Endothelial cell of umbilical vein (primary cell): ENCODE measurements at regions of chr20 and their contacts with region 1.

Region 1: GRCh38 chr20:12961725-12962124 is 47.0 kb upstream of the SPTLC3 start:
- DNase-seq: no peak
- H3K4me3 ChIP-seq: no peak overlapping the region
- H3K27ac ChIP-seq: no peak overlapping the region
- H3K4me1 ChIP-seq: peaks cover 3% of the 10 kb centered on the region
- H3K27me3 ChIP-seq: no peaks in the 10 kb centered on the region
- CTCF ChIP-seq: no peak
- POLR2A ChIP-seq: no peak

Region 2: GRCh38 chr20:12875510-12875909 is 86.2 kb before region 1 on chr20:
- CTCF ChIA-PET with region 1: no interaction called
- POLR2A ChIA-PET with region 1: no interaction called
- dilution Hi-C with region 1: no loop called
- intact Hi-C with region 1: no loop called
- DNase-seq: no peak
- H3K4me3 ChIP-seq: no peak overlapping the region
- H3K27ac ChIP-seq: no peak overlapping the region
- H3K4me1 ChIP-seq: no peaks in the 10 kb centered on the region
- H3K27me3 ChIP-seq: no peaks in the 10 kb centered on the region
- CTCF ChIP-seq: no peak
- POLR2A ChIP-seq: no peak

Region 3: DNA sequence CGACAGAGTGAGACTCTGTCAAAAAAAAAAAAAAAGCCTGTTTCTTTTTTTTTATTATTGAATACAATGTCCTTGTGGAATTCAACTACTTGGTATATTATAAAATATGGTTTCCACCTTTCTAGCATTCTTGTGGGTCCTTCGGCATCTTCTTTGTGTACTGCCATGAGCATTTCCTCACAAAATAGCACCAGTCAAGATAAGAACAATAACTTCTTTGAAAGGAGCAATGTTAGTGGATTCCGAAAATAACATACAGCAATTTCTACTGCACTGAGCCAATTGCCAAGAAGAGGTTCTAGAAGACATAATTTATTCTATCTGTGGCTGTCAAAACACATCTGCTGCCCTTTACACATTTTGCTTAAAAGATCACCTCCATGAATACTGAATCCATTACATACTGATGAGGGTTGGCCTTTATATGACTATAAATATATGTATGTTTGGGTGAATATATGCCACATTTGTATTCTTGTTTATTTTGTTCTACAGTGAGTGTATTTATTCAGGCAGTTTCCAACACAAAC is 27.9 kb after region 1 on chr20:
- CTCF ChIA-PET with region 1: no interaction called
- POLR2A ChIA-PET with region 1: no interaction called
- dilution Hi-C with region 1: no loop called
- intact Hi-C with region 1: loop called (anchors 2 kb)
- DNase-seq: no peak
- H3K4me3 ChIP-seq: no peak overlapping the region
- H3K27ac ChIP-seq: no peak overlapping the region
- H3K4me1 ChIP-seq: no peaks in the 10 kb centered on the region
- H3K27me3 ChIP-seq: peaks cover 0 to 2% of the 10 kb centered on the region in 2 experiments
- CTCF ChIP-seq: no peak
- POLR2A ChIP-seq: no peak

Region 4: DNA sequence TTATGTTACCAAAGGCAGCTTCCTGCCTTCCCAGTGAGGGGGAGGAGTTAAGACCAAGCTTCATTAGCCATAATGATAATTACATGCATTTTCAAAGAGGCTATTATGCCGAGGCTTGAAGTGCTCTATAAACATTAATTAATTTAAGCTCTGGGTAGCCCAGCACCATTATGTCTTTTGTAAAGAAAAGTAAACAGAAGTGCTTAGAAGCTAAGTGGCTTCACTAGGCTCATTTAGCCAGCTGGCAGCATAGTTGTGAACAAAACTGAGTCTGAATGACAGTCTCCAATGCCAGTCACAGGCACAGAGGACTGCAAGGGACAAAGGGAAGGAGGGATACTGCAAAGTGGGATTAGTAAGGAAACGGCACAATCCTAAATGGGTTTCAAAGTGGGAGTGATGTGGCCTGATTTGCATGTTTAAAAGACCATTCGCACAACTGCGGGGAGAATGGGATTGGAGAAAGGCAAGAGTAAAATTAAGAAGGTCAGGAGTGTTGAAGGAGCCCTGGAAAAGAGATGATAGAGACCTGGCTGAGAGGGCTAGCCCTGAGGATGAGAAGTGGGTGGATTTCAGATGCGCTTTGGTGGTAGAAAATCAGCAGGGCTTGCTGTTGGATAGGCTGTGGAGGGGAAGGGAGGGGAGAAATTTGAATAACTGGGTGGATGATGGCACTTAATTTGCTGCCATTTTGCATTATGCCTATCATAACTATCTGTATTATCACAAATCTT is 239.2 kb after region 1 on chr20:
- CTCF ChIA-PET with region 1: no interaction called
- POLR2A ChIA-PET with region 1: no interaction called
- dilution Hi-C with region 1: no loop called
- intact Hi-C with region 1: no loop called
- DNase-seq: no peak
- H3K4me3 ChIP-seq: no peak overlapping the region
- H3K27ac ChIP-seq: no peak overlapping the region
- H3K4me1 ChIP-seq: no peaks in the 10 kb centered on the region
- H3K27me3 ChIP-seq: peaks cover 0 to 2% of the 10 kb centered on the region in 2 experiments
- CTCF ChIP-seq: no peak
- POLR2A ChIP-seq: no peak